Caco-2 (cell line): ENCODE measurements at regions of chr1 and their contacts with region 1.

Region 1: GRCh38 chr1:185053204-185053603 is 7.8 kb downstream of the RNF2 start:
- DNase-seq: no peak
- H3K4me3 ChIP-seq: no peak overlapping the region
- H3K4me3 Mint-ChIP-seq: no peak overlapping the region
- H3K27ac Mint-ChIP-seq: no peak overlapping the region
- H3K4me1 ChIP-seq: no peaks in the 10 kb centered on the region
- H3K4me1 Mint-ChIP-seq: no peaks in the 10 kb centered on the region
- H3K27me3 ChIP-seq: no peaks in the 10 kb centered on the region
- H3K27me3 Mint-ChIP-seq: no peaks in the 10 kb centered on the region
- CTCF ChIP-seq: no peak

Region 2: GRCh38 chr1:185066181-185066580 is 13.0 kb after region 1 on chr1:
- CTCF ChIA-PET with region 1: no interaction called
- POLR2A ChIA-PET with region 1: no interaction called
- intact Hi-C with region 1: loop called (anchors 2 kb)
- DNase-seq: no peak
- H3K4me3 ChIP-seq: no peak overlapping the region
- H3K4me3 Mint-ChIP-seq: no peak overlapping the region
- H3K27ac Mint-ChIP-seq: no peak overlapping the region
- H3K4me1 ChIP-seq: no peaks in the 10 kb centered on the region
- H3K4me1 Mint-ChIP-seq: no peaks in the 10 kb centered on the region
- H3K27me3 ChIP-seq: no peaks in the 10 kb centered on the region
- H3K27me3 Mint-ChIP-seq: no peaks in the 10 kb centered on the region
- CTCF ChIP-seq: no peak